GM13977 (cell line): ENCODE measurements at regions of chr3 and their contacts with region 1.

Region 1: GRCh38 chr3:45656575-45657363 is 32.4 kb upstream of the SACM1L start:
- DNase-seq: peak; percentile 81
- CTCF ChIP-seq: peak; percentile 81

Region 2: DNA sequence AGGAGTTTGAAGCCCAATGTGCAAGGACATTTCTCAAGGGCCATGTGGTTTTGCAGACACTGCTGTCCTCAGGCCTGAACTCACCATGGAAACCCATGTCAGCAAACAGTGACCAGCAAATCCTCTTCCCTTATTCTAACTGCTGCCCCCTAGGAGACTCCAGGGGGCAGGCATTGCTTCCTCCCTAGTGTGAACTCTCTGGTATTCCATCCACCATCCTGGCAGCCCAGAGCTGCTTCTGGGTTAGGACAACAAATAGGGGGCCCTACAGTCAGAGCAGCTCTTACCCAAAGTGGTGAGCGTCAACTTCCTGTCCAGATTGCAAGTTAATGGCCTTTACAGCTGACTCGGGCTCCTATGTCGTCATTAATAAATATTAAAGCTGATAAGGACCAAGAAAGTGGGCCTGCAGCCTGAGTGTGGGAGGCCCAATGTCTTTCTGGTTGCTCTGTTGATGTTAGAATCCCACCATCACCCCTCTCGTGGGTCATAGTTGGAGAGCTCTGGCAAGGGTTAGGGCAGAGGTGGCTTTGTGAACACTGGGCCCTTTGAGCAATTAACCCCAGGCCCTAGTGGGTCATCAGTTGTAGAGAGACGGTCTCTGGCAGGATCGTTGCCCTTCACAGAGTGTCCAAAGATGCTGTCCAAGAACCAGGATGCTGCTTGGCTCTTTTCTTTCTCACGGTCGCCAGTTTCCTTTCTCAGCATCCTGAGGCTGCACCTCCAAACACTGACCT is 740.9 kb before region 1 on chr3:
- in situ Hi-C with region 1: no loop called
- DNase-seq: no peak
- CTCF ChIP-seq: no peak

Region 3: DNA sequence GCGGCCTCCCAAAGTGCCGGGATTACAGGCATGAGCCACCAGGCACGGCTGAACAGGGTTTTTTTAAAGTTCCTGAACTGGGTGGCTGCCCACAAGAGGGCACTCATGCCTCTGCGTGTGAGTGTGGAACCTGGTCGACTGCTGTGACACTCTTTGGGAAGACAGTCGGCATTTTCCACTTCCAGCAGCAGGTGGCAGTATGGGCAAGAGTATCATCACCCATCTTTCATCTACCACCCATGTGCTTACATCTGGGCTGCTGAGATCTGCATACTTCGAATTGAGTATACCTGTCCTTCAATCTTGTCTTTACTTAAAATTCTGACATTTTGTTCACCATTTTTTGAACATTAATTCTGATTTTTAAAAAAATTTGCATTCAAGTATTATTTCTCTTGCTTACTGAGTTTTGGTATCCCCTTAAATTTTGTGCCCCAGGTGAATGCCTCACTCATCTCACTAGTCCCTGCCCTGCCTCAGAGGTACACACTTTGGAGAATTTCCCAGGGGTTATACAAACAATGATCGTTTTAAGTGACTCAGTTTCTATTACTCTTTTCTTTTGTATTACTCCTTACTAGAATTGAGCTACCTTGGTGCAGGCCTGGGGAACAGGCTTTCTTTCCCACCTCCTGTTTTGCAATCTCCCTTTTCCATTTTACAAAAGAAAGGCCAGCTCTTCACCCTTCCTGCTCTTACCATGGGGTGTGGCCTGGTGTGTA is 618.9 kb before region 1 on chr3:
- in situ Hi-C with region 1: loop called (anchors 25 kb)
- DNase-seq: peak; percentile 95
- CTCF ChIP-seq: peak; percentile 84

Region 4: GRCh38 chr3:45516829-45517228 is 139.9 kb before region 1 on chr3:
- in situ Hi-C with region 1: loop called (anchors 10 kb)
- DNase-seq: no peak
- CTCF ChIP-seq: no peak

Region 5: GRCh38 chr3:45693941-45694521 is 37.3 kb after region 1 on chr3:
- in situ Hi-C with region 1: no loop called
- DNase-seq: peak; percentile 24
- CTCF ChIP-seq: no peak

Region 6: DNA sequence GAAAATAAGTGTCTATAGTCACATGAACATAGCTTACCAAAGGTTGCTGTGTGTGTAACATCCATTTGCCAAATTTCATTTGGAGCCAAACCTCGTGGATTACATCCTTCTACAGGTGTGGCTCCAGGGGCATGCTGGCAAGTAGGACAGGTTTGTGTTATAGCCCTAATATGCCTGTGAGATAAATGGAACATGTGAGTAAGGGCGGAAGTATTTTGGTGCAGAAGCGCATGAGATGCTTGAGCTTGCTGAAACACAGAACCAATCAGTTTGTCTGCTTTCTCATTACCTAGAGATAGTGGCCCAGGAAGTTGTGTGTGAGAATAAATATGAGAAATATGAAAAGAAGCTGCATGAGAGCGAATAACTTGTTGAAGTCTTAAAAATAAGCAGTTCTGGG is 392.3 kb after region 1 on chr3:
- in situ Hi-C with region 1: no loop called
- DNase-seq: no peak
- CTCF ChIP-seq: no peak